ENCODE measurements at regions of chr16 and their contacts with region 1.

Region 1: GRCh38 chr16:58009856-58010416 is 8.7 kb downstream of the USB1 start:
- DNase-seq: peak in 1 of 2 donors; percentile 7
- ATAC-seq: no peak
- H3K4me3 ChIP-seq: no peak overlapping the region
- H3K27ac ChIP-seq: no peak overlapping the region
- H3K4me1 ChIP-seq: peaks cover 2% of the 10 kb centered on the region
- H3K27me3 ChIP-seq: no peaks in the 10 kb centered on the region
- CTCF ChIP-seq: no peak

Region 2: DNA sequence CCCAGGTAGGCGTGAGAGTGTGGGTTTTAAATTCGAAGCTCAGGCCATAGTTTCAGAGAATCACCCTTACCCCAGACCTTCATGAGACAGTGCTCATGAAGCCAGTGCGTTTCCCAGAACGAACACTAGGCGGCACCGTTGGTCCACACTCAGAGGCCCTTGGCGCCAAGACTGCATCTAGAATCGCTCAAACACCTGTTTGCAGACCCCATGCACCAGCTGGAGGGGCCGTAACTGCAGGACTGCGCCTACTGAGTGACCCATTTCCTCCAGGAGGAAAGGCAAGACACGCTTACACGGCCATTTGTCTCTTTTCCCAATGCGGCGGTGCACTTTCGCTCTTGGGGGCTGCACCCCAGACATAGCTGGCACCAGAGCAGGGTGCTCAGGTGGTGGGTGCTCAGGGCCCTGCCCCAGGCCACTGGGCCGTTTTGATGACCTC is 433.5 kb before region 1 on chr16:
- intact Hi-C with region 1: loop called in 1 of 2 experiments (anchors 5 kb)
- DNase-seq: peak; percentile 67 to 82
- ATAC-seq: peak; percentile 62 to 81 (median 70)
- H3K4me3 ChIP-seq: no peak overlapping the region
- H3K27ac ChIP-seq: no peak overlapping the region
- H3K4me1 ChIP-seq: no peaks in the 10 kb centered on the region
- H3K27me3 ChIP-seq: peaks cover 0 to 6% (median 3%) of the 10 kb centered on the region in 3 donors
- CTCF ChIP-seq: peak; percentile 84

Measured in psoas muscle (tissue), 8 donors.